ENCODE measurements at regions of chr5 and their contacts with region 1.

Region 1: DNA sequence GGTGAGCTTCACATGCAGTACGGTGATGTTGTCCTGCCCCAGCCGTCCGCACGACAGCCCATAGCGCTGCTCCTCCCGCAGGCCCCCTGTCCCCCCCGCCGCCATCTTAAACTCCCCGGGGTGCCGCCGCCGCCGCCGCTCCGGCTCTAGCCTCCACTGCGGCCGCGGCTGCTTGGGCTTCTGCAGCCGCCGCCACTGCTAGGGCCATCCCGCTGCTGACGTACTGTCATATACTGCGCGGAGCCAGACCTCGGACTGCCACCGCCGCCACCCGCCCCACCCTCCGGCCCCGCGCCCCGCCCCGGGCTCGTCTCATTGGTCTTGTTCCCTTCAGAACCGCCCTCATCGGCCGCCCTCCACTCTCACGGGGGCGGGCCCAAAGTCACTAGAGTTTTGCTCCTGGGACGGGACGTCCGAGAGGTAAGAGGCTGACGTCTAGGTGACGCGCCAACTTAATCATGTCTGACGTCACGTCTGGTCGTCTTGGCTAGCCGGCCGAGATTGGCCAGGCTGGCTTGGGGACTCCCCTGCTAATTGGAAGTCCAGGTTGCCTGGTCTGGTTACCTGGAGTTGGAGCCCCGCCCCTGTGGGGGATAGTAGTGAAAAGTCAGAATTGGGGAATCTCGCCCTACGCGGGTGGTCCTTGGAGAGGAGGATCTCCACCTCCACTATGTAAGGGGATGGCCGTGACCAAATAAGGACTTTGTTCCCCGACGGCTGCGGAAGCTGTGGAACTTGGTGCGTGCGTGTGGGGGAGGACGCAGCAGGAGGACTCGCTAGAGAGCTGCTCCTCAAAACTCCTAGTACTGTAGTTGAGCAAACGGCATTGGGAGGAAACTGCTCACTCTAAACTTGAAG is at the start of gene ELL2:
- DNase-seq: peak; percentile 99
- H3K4me3 Mint-ChIP-seq: peak within 1 kb of the TSS; percentile 98
- H3K27ac Mint-ChIP-seq: peak within 1 kb of the TSS; percentile 99
- H3K4me1 Mint-ChIP-seq: peaks cover 47% of the 10 kb centered on the region
- H3K27me3 Mint-ChIP-seq: no peaks in the 10 kb centered on the region
- total RNA-seq, gene ELL2: 103 and 111 TPM in 2 replicates

Region 2: GRCh38 chr5:95858661-95859326 is 103.1 kb before region 1 on chr5:
- intact Hi-C with region 1: loop called (anchors 1 kb)
- DNase-seq: peak; percentile 96
- H3K4me3 Mint-ChIP-seq: peak overlapping the region; percentile 66
- H3K27ac Mint-ChIP-seq: peak overlapping the region; percentile 78
- H3K4me1 Mint-ChIP-seq: peaks cover 52% of the 10 kb centered on the region
- H3K27me3 Mint-ChIP-seq: no peaks in the 10 kb centered on the region

Region 3: DNA sequence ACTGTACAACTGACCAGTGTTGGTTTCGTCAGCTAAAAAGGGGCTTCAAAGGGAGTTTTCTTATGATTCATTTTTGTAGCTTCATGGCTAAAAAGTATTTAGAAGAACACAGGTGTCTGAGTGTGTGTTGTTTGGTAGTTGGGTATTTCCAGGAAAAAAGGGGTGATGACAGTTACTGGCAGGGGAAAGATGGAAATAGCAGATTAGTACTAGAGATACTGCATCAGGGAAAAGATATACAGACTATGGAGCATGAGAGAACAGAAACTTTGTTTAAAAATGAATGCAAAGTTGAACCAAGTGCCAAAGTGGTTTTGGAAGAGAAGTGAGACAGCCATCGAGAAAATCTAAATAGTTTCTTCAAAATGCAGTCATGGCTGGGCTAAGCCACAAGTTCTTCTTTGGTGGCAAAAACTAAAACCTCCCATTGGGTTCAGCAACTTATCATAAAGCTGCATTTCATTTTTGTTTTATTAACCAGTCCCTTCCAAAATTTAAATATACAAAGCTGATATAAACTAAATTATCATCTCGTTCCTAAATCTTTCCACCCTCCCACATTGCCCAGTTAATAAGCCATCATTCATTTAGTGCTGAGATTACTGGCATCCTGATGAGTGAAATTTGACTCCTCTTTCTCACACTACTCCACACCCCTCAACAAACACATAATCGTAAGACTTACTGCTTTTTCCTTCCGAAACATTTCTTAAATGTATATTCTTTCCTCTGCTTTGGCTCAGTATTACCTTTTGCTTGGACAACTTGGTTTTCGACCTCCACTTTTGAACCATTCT is 33.7 kb before region 1 on chr5:
- intact Hi-C with region 1: loop called (anchors 1 kb)
- DNase-seq: peak; percentile 61
- H3K4me3 Mint-ChIP-seq: peak overlapping the region; percentile 48
- H3K27ac Mint-ChIP-seq: peak overlapping the region; percentile 82
- H3K4me1 Mint-ChIP-seq: peaks cover 58% of the 10 kb centered on the region
- H3K27me3 Mint-ChIP-seq: no peaks in the 10 kb centered on the region

Region 4: GRCh38 chr5:96079075-96079474 is 117.2 kb after region 1 on chr5:
- intact Hi-C with region 1: loop called (anchors 1 kb)
- DNase-seq: no peak
- H3K4me3 Mint-ChIP-seq: peak overlapping the region; percentile 42
- H3K27ac Mint-ChIP-seq: peak overlapping the region; percentile 87
- H3K4me1 Mint-ChIP-seq: peaks cover 45% of the 10 kb centered on the region
- H3K27me3 Mint-ChIP-seq: no peaks in the 10 kb centered on the region

Region 5: DNA sequence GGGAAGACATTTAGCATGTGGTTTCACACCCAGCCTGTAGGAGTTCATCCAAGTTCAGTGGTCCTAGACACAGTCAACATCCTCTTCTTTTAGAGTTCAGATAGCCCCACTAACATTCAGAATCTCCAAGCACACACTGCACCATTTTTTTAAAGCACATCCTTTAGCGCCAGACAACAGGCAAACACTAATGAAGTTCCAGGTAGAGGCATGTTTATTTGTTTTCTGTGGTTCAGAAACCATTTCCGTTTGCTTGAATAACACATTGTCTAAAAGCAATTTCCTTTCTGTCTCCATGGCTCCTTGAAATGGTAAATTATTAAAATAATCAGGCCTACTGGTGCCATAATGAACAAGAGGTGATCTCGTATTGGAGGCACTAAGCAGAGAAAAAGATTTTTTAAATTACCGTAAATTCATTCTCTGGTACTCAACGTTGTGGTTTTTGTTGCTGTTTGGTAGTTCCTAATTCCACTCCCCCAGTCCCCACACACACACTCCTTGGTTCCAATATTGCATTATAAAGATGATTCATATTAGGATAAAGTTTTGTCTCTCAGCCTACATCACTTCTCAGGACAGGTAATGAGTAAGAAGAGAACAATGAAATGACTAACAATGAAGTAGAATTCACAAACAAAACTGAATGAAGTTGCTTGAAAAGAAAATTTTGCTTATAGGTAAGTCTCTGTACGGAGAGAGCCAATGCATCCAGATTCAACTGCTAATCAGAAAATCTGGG is 318.1 kb after region 1 on chr5:
- intact Hi-C with region 1: loop called (anchors 1 kb)
- DNase-seq: no peak
- H3K4me3 Mint-ChIP-seq: peak overlapping the region; percentile 53
- H3K27ac Mint-ChIP-seq: peak overlapping the region; percentile 77
- H3K4me1 Mint-ChIP-seq: peaks cover 22% of the 10 kb centered on the region
- H3K27me3 Mint-ChIP-seq: peaks cover 6% of the 10 kb centered on the region

Region 6: GRCh38 chr5:96412868-96413449 is 451.1 kb after region 1 on chr5:
- intact Hi-C with region 1: no loop called
- DNase-seq: no peak
- H3K4me3 Mint-ChIP-seq: no peak overlapping the region
- H3K27ac Mint-ChIP-seq: no peak overlapping the region
- H3K4me1 Mint-ChIP-seq: no peaks in the 10 kb centered on the region
- H3K27me3 Mint-ChIP-seq: peaks cover 3% of the 10 kb centered on the region

Region 7: GRCh38 chr5:96536991-96537785 is 575.3 kb after region 1 on chr5:
- intact Hi-C with region 1: loop called (anchors 5 kb)
- DNase-seq: peak; percentile 83
- H3K4me3 Mint-ChIP-seq: peak overlapping the region; percentile 56
- H3K27ac Mint-ChIP-seq: peak overlapping the region; percentile 85
- H3K4me1 Mint-ChIP-seq: peaks cover 27% of the 10 kb centered on the region
- H3K27me3 Mint-ChIP-seq: peaks cover 7% of the 10 kb centered on the region

Region 8: DNA sequence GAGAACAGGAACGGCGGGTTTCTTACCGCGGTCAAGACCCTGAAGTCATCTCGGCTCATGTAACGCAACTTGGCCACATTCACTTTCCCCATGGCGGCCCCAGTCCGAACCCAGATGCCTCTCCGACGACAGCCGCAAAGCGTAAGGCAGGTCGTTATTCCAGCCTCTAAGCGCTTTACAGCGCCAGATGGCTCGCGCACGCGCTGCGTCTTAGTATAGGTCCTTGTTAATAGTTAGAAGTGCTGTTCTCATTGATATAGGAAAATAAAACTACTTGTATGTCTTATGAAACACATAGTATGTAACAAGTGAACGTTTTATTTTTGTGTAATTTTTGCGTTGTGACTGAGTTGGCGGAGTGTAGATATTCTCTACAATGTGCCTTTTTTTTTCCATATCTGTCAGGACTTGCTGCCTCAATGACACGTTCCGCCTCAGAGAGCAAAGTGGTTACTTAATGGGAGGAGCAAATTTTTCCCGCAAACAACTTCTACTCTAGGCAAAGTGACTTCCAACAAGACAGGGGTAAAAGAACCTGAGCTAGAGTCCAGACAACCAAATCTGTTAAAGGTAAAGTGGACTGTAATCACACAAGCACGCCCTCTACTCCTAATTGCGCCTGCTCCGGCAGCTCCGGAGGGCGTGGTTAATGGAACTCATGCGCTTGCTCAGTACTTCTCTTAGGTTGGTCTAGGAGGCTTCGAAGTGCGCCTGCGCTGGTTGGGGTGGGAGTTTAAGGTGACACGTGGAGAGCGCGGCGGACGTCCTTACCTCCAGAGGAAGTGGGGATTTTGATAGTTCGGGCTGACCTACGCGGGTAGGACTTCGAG is 1221.5 kb after region 1 on chr5 and contains the start of gene RIOK2:
- intact Hi-C with region 1: loop called (anchors 2 kb)
- DNase-seq: peak; percentile 97
- H3K4me3 Mint-ChIP-seq: peak within 1 kb of the TSS; percentile 89
- H3K27ac Mint-ChIP-seq: peak within 1 kb of the TSS; percentile 100
- H3K4me1 Mint-ChIP-seq: peaks cover 24% of the 10 kb centered on the region
- H3K27me3 Mint-ChIP-seq: peaks cover 4% of the 10 kb centered on the region
- total RNA-seq, gene RIOK2: 40.8 and 42.0 TPM in 2 replicates